Activated T-helper 1 cell treated with anti-CD3 and anti-CD28 coated beads, Interleukin-12 subunit alpha, Interleukin-12 subunit beta, Interleukin-2, Interleukin-4 antibody, amounts not matched to agents 30 ng/mL and 10 ng/mL and 1 ng/mL, durations not matched to agents 14 hours and 24 hours and 36 hours (primary cell): ENCODE measurements at regions of chr6 and their contacts with region 1.

Region 1: GRCh38 chr6:25788305-25788922 is 33.9 kb downstream of the SLC17A4 start:
- DNase-seq: peak; percentile 13
- H3K4me3 Mint-ChIP-seq: no peak overlapping the region
- H3K27ac Mint-ChIP-seq: no peak overlapping the region
- H3K4me1 Mint-ChIP-seq: peaks cover 5% of the 10 kb centered on the region
- H3K27me3 Mint-ChIP-seq: peaks cover 4% of the 10 kb centered on the region

Region 2: DNA sequence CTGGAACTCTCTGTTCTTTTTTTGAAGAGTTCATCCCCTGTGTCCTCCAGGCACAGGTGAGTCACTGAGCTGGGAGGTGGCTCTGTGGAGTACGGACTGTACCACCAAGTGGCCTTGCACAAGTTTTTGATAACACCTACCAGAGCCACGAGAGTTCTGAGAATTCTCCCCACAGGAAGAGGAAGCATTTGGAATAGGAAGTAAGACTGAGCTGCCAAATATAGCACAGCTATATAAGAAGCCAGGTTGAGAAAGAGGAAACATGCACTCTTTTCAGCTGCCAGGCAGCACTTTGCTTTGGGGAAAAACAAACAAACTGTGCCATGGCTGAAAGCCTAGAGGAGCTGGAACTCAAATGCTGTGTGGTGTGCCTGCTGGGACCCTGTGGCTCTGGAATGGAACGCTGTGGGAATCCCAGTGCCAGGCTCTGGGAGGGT is 781.8 kb before region 1 on chr6:
- intact Hi-C with region 1: no loop called
- DNase-seq: peak; percentile 55
- H3K4me3 Mint-ChIP-seq: peak overlapping the region; percentile 9
- H3K27ac Mint-ChIP-seq: peak overlapping the region; percentile 87
- H3K4me1 Mint-ChIP-seq: peaks cover 82% of the 10 kb centered on the region
- H3K27me3 Mint-ChIP-seq: no peaks in the 10 kb centered on the region

Region 3: DNA sequence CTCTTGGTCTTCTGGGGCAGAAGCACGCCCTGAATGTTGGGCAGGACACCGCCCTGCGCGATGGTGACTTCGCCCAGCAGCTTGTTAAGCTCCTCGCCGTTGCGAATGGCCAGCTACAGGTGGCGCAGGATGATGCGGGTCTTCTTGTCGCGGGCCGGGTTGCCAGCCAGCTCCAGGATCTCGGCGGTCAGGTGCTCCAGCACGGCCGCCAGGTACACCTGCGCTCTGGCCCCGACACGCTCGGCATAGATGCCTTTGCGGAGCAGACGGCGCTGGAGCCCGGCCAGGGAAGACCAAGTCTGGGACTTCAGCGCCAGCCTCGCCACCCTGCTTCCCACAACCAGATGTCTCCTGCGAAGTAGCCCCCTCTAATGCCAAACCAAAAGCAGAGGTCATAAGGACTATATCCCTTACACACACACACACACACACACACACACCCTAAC is 93.7 kb after region 1 on chr6:
- intact Hi-C with region 1: loop called (anchors 1 kb)
- DNase-seq: peak; percentile 24
- H3K4me3 Mint-ChIP-seq: peak overlapping the region; percentile 86
- H3K27ac Mint-ChIP-seq: peak overlapping the region; percentile 72
- H3K4me1 Mint-ChIP-seq: peaks cover 15% of the 10 kb centered on the region
- H3K27me3 Mint-ChIP-seq: peaks cover 6% of the 10 kb centered on the region

Region 4: DNA sequence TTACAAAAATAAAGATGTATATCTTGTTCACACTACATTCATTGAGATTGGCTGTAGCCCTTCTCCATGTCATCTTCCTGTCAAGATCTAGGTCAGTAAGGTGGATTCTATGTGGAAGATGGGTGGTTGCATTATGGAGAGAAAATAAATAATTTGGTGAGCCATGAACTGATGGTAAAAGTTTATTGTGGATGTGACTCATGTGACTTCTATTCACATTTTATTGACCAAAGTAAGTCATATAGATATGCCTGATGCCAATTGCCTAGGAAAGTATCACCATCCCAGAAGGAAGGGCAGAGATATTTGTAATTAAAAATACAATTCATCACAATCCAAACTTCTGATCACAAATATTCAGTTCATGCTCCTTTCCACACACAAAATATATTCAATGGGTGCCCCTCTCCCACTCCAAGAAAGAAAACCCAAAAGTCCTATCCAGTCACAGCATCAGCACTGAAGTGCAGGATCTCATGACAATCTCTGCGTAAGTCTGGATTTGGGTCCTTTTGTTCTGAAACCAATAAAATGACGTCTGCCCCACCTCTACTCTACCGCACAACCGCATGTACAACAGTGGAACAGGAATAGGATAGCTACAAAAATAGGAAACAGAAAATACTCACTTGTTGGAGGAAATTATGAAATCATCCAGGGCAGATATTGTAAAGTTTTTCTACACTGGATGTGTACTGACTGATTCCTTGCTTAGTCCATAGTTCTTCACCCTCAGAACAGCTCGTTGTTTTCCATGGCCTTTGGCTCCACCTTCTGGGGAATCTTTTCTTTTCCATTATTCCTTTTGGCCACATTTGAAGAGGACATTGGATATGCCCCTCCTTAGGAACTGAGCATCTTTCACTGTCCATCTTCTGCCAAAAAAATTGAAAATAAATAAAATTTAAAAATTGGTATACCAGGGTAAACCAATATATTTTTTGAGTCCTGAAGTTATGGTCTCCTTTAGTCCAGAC is 101.8 kb after region 1 on chr6:
- intact Hi-C with region 1: loop called (anchors 2 kb)
- DNase-seq: no peak
- H3K4me3 Mint-ChIP-seq: no peak overlapping the region
- H3K27ac Mint-ChIP-seq: no peak overlapping the region
- H3K4me1 Mint-ChIP-seq: peaks cover 10% of the 10 kb centered on the region
- H3K27me3 Mint-ChIP-seq: peaks cover 7% of the 10 kb centered on the region

Region 5: GRCh38 chr6:26003102-26003694 is 214.8 kb after region 1 on chr6:
- intact Hi-C with region 1: loop called (anchors 1 kb)
- DNase-seq: no peak
- H3K4me3 Mint-ChIP-seq: no peak overlapping the region
- H3K27ac Mint-ChIP-seq: no peak overlapping the region
- H3K4me1 Mint-ChIP-seq: peaks cover 13% of the 10 kb centered on the region
- H3K27me3 Mint-ChIP-seq: no peaks in the 10 kb centered on the region